ENCODE measurements at regions of chr22 and their contacts with region 1.

Region 1: GRCh38 chr22:21867528-21868266 is at the start of gene MAPK1:
- DNase-seq: peak; percentile 96 to 98
- ATAC-seq: peak; percentile 98
- H3K4me3 ChIP-seq: peak within 1 kb of the TSS; percentile 97
- H3K27ac ChIP-seq: peak within 1 kb of the TSS; percentile 91 to 95
- H3K4me1 ChIP-seq: peaks cover 0 to 3% of the 10 kb centered on the region in 2 donors
- H3K27me3 ChIP-seq: no peaks in the 10 kb centered on the region
- total RNA-seq, gene MAPK1: 137 to 159 TPM

Region 2: GRCh38 chr22:21735200-21736076 is 132.3 kb before region 1 on chr22 and contains the start of gene YPEL1:
- intact Hi-C with region 1: loop called in 1 of 2 experiments (anchors 5 kb)
- DNase-seq: peak; percentile 98 to 99
- ATAC-seq: peak; percentile 99
- H3K4me3 ChIP-seq: peak within 1 kb of the TSS; percentile 80 to 94
- H3K27ac ChIP-seq: peak within 1 kb of the TSS in 1 of 2 donors; percentile 45
- H3K4me1 ChIP-seq: no peaks in the 10 kb centered on the region
- H3K27me3 ChIP-seq: no peaks in the 10 kb centered on the region
- total RNA-seq, gene YPEL1: 4.7 to 9.1 TPM

Measured in aorta (tissue), 5 donors.